ENCODE measurements at regions of chr1 and their contacts with region 1.

Region 1: GRCh38 chr1:229440851-229441537 is 7.1 kb upstream of the ACTA1 start:
- DNase-seq: peak; percentile 20
- ATAC-seq: peak; percentile 94
- H3K4me3 Mint-ChIP-seq: no peak overlapping the region
- H3K27ac Mint-ChIP-seq: peak overlapping the region; percentile 52
- H3K4me1 Mint-ChIP-seq: peaks cover 23% of the 10 kb centered on the region
- H3K27me3 Mint-ChIP-seq: peaks cover 11% of the 10 kb centered on the region

Region 2: GRCh38 chr1:229270547-229271447 is 170.2 kb before region 1 on chr1 and contains the start of gene RAB4A:
- CTCF ChIA-PET with region 1: no interaction called
- POLR2A ChIA-PET with region 1: no interaction called
- intact Hi-C with region 1: loop called in 1 of 2 experiments (anchors 5 kb)
- DNase-seq: peak; percentile 84
- ATAC-seq: peak; percentile 87
- H3K4me3 Mint-ChIP-seq: peak within 1 kb of the TSS; percentile 82
- H3K27ac Mint-ChIP-seq: peak within 1 kb of the TSS; percentile 71
- H3K4me1 Mint-ChIP-seq: peaks cover 31% of the 10 kb centered on the region
- H3K27me3 Mint-ChIP-seq: no peaks in the 10 kb centered on the region
- total RNA-seq, gene RAB4A: 22.1 to 24.0 TPM

Region 3: DNA sequence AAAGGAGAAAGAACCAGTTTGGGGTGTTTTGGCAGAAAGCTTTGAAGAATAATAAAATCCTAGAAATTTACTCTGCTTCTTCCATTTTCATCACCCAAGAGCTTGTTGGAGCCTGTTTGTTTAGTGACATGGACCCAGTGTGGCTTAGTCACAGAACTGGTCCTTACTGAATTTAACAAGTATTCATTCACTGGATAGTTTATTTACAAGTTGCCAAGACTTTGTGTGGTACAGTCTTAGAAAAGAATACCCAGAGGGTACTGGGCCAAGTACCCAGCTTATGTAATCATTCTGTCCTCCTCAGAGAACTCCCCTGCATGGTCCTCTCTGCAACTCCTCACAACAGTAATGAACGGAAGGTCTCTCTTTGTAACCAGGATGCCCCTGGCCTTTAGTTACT is 153.7 kb before region 1 on chr1:
- CTCF ChIA-PET with region 1: no interaction called
- POLR2A ChIA-PET with region 1: no interaction called
- intact Hi-C with region 1: loop called in 1 of 2 experiments (anchors 1 kb)
- DNase-seq: no peak
- ATAC-seq: no peak
- H3K4me3 Mint-ChIP-seq: no peak overlapping the region
- H3K27ac Mint-ChIP-seq: no peak overlapping the region
- H3K4me1 Mint-ChIP-seq: peaks cover 29% of the 10 kb centered on the region
- H3K27me3 Mint-ChIP-seq: no peaks in the 10 kb centered on the region

Region 4: GRCh38 chr1:229370601-229371021 is 70.4 kb before region 1 on chr1:
- CTCF ChIA-PET with region 1: no interaction called
- POLR2A ChIA-PET with region 1: no interaction called
- intact Hi-C with region 1: no loop called
- DNase-seq: no peak
- ATAC-seq: no peak
- H3K4me3 Mint-ChIP-seq: no peak overlapping the region
- H3K27ac Mint-ChIP-seq: no peak overlapping the region
- H3K4me1 Mint-ChIP-seq: no peaks in the 10 kb centered on the region
- H3K27me3 Mint-ChIP-seq: peaks cover 6% of the 10 kb centered on the region

Region 5: GRCh38 chr1:229452956-229453801 is 12.2 kb after region 1 on chr1:
- CTCF ChIA-PET with region 1: interaction called, 26 read pairs
- POLR2A ChIA-PET with region 1: no interaction called
- intact Hi-C with region 1: no loop called
- DNase-seq: no peak
- ATAC-seq: no peak
- H3K4me3 Mint-ChIP-seq: no peak overlapping the region
- H3K27ac Mint-ChIP-seq: no peak overlapping the region
- H3K4me1 Mint-ChIP-seq: no peaks in the 10 kb centered on the region
- H3K27me3 Mint-ChIP-seq: no peaks in the 10 kb centered on the region

Region 6: GRCh38 chr1:229625915-229626831 is 185.2 kb after region 1 on chr1 and contains the starts of genes TAF5L and URB2:
- CTCF ChIA-PET with region 1: no interaction called
- POLR2A ChIA-PET with region 1: no interaction called
- intact Hi-C with region 1: loop called in 1 of 2 experiments (anchors 5 kb)
- DNase-seq: peak; percentile 93
- ATAC-seq: peak; percentile 92
- H3K4me3 Mint-ChIP-seq: peak within 1 kb of the TSS; percentile 89
- H3K27ac Mint-ChIP-seq: peak within 1 kb of the TSS; percentile 96
- H3K4me1 Mint-ChIP-seq: peaks cover 57% of the 10 kb centered on the region
- H3K27me3 Mint-ChIP-seq: no peaks in the 10 kb centered on the region
- total RNA-seq, gene TAF5L: 16.5 to 17.6 TPM
- total RNA-seq, gene URB2: 13.9 to 16.5 TPM

Region 7: GRCh38 chr1:230104395-230105244 is 663.6 kb after region 1 on chr1:
- CTCF ChIA-PET with region 1: no interaction called
- POLR2A ChIA-PET with region 1: no interaction called
- intact Hi-C with region 1: loop called in 1 of 2 experiments (anchors 5 kb)
- DNase-seq: peak; percentile 95
- ATAC-seq: peak; percentile 78
- H3K4me3 Mint-ChIP-seq: peak overlapping the region; percentile 44
- H3K27ac Mint-ChIP-seq: peak overlapping the region; percentile 92
- H3K4me1 Mint-ChIP-seq: peaks cover 86% of the 10 kb centered on the region
- H3K27me3 Mint-ChIP-seq: no peaks in the 10 kb centered on the region

Measured in activated CD4-positive, alpha-beta T cell treated with anti-CD3 and anti-CD28 coated beads for 36 hours (primary cell).